Heart right ventricle (tissue), 16 donors: ENCODE measurements at regions of chr2 and their contacts with region 1.

Region 1: GRCh38 chr2:48589170-48589767 is 28.4 kb upstream of the GTF2A1L start:
- DNase-seq: peak in 1 of 2 donors; percentile 48
- ATAC-seq: peak in 6 of 8 donors; percentile 20 to 55 (median 47)
- H3K4me3 ChIP-seq: no peak overlapping the region
- H3K27ac ChIP-seq: no peak overlapping the region
- H3K4me1 ChIP-seq: peaks cover 0 to 9% (median 0%) of the 10 kb centered on the region in 9 donors
- H3K27me3 ChIP-seq: no peaks in the 10 kb centered on the region
- CTCF ChIP-seq: peak; percentile 44 to 85 (median 73)

Region 2: DNA sequence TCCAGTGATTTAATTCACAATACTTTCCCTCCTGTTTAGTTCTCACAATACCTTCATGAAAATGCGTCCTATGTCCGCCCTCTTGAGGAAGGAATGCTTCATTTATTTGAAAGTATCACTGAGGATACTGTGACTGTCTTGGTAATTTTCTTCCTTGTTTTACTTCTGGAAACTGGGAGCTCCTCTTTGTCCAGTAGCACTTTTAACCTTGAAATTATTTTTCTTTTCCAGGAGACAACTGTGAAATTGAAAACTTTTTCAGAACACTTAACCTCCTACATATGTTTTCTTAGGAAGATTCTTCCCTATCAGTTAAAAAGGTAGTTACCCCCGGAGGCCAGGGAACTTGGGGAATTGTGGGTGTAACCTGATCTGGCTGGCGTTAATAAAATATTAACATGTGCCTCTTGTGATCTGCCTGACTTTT is 118.2 kb before region 1 on chr2:
- intact Hi-C with region 1: loop called in 4 of 10 experiments (anchors 10 kb)
- DNase-seq: peak in 1 of 2 donors; percentile 25
- ATAC-seq: peak in 6 of 8 donors; percentile 59 to 73 (median 66)
- H3K4me3 ChIP-seq: no peak overlapping the region
- H3K27ac ChIP-seq: peak overlapping the region in 3 of 10 donors; percentile 30 to 38 (median 34)
- H3K4me1 ChIP-seq: peaks cover 0 to 24% (median 15%) of the 10 kb centered on the region in 9 donors
- H3K27me3 ChIP-seq: no peaks in the 10 kb centered on the region
- CTCF ChIP-seq: peak; percentile 34 to 79 (median 65)

Region 3: DNA sequence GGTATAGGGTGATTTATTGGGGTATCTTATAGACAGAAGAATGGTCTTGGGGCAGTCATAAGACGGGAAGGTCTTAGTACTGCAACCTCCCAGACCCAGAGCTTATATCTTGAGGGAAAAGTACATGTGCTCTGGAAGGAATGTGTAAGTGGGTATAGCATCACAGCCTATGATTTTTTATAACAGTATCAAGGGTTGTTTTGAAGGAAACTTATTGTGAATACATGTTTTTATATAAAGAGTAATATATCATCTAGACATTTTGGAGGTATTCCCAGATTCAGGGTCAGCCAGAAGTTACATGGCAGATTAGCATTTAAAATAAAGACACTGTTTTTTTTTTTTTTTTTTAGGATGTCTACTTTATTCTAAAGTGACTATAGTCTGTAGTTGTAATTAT is 107.0 kb before region 1 on chr2:
- intact Hi-C with region 1: loop called in 5 of 10 experiments (anchors 10 kb)
- DNase-seq: no peak
- ATAC-seq: no peak
- H3K4me3 ChIP-seq: no peak overlapping the region
- H3K27ac ChIP-seq: no peak overlapping the region
- H3K4me1 ChIP-seq: peaks cover 0 to 12% (median 0%) of the 10 kb centered on the region in 9 donors
- H3K27me3 ChIP-seq: no peaks in the 10 kb centered on the region
- CTCF ChIP-seq: no peak

Region 4: GRCh38 chr2:48510329-48510728 is 78.9 kb before region 1 on chr2:
- intact Hi-C with region 1: loop called in 4 of 10 experiments (anchors 5 to 10 kb)
- DNase-seq: no peak
- ATAC-seq: peak in 1 of 8 donors; percentile 44
- H3K4me3 ChIP-seq: no peak overlapping the region
- H3K27ac ChIP-seq: peak overlapping the region in 5 of 10 donors; percentile 21 to 72 (median 39)
- H3K4me1 ChIP-seq: peaks cover 7 to 33% (median 25%) of the 10 kb centered on the region in 9 donors
- H3K27me3 ChIP-seq: no peaks in the 10 kb centered on the region
- CTCF ChIP-seq: no peak

Region 5: DNA sequence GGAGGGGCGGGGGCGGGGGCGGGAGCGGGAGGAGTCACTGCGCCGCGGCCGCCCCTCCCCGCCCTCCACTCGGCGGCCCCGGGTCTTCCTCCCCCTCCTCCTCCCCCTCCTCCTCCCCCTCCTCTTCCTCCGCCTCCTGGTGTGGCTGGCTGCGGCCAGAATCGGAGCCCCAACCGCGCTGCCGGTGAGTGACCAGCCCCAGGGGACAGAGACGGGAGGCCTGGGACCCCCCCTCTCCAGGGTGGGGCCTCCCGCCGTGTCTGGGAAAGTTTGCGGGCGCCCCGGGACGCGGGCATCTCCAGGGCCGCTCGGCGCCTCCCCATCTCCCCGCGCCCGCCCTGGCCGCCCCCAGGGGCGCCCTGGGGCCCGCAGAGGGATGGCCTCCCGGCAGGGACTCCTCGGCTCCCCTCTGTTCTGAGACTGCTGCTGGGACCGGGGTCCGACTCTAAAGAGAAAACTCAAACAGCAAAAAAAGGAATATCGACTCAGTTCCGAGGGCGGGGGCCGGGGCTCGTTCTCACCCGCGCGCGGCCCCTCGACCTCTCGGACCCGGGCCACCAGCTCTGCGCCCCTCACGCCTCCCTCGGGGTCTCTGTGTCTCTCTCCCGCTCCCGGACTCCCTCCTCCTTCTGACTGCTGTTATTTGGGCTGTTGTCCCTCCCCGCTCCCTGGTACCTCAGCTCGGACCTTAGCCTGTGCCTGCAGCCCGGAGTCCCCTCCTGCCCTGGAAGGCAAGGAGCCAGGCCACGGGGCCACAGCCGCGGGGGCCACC is 59.0 kb before region 1 on chr2 and contains the start of gene STON1:
- intact Hi-C with region 1: loop called in 3 of 10 experiments (anchors 5 kb)
- DNase-seq: peak; percentile 64 to 73
- ATAC-seq: peak; percentile 56 to 81 (median 69)
- H3K4me3 ChIP-seq: peak within 1 kb of the TSS; percentile 76 to 98 (median 90)
- H3K27ac ChIP-seq: peak within 1 kb of the TSS; percentile 73 to 93 (median 84)
- H3K4me1 ChIP-seq: peaks cover 7 to 56% (median 23%) of the 10 kb centered on the region in 9 donors
- H3K27me3 ChIP-seq: peaks cover 0 to 6% (median 0%) of the 10 kb centered on the region in 7 donors
- CTCF ChIP-seq: peak in 4 of 9 donors; percentile 7 to 26 (median 25)
- total RNA-seq, gene STON1: 2.8 to 8.9 (median 4.5) TPM